ENCODE measurements at regions of chr13 and their contacts with region 1.

Region 1: DNA sequence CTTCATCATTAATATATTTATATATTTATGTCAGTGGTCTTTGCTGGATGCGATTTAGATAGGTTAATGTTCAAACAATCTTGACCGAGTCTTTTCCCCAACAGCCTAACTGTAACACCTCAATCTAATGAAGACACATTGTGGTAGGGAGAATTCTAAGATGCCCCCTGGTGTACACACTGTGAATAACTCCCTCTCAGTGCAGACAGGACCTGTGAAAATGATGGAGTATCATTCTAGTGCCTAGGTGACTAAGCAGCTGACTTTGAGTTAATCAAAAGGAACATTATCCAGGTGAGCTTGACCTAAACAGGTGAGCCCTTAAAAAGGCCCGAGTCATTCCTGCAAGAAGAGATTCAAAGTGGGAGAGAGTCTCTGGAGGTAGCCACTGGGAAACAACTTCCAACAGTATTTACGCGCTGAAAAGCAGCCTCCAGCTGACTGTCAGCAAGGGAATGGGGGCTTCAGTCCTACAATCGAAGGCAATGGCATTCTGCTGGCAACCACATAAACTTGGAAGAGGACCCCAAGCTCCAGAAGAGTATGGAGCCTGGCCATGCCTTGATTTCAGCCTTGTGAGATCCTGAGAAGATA is 28.0 kb upstream of the KBTBD7 start:
- DNase-seq: peak; percentile 40
- H3K4me3 Mint-ChIP-seq: no peak overlapping the region
- H3K27ac Mint-ChIP-seq: no peak overlapping the region
- H3K4me1 Mint-ChIP-seq: no peaks in the 10 kb centered on the region
- H3K27me3 Mint-ChIP-seq: no peaks in the 10 kb centered on the region

Region 2: DNA sequence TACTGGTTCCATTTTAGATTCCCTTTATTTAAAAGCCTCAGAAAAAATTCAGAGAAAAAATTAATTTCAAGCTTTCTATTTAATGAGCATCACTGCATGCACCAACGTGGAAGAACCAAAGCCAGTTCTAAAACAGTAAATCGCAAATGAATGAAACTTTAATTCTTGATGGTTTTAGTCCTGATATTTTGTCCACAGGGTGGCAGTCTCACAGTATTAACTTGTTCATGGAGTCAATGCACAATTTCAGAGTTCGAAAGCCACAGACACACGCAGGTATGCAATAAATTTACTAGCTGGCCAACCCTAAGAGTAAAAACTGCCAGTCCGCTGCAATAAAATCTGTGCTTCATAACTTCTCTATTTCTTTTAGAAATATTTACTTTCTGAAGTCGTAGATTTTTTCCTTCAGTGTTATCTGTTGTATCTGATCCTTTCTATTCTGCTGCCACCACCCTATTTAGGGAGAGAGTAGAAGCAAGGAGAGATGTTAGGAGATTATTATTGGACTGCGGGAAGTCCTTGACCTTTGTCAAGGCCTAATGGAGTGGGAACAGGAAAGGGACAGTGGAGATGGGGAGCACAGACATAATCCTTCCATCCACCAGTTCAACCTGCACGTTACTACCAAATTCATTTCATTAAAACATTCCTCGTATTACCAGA is 168.0 kb before region 1 on chr13:
- intact Hi-C with region 1: loop called (anchors 1 kb)
- DNase-seq: peak; percentile 24
- H3K4me3 Mint-ChIP-seq: no peak overlapping the region
- H3K27ac Mint-ChIP-seq: no peak overlapping the region
- H3K4me1 Mint-ChIP-seq: peaks cover 47% of the 10 kb centered on the region
- H3K27me3 Mint-ChIP-seq: no peaks in the 10 kb centered on the region

Region 3: GRCh38 chr13:41075034-41075433 is 147.3 kb before region 1 on chr13:
- intact Hi-C with region 1: loop called (anchors 1 kb)
- DNase-seq: no peak
- H3K4me3 Mint-ChIP-seq: no peak overlapping the region
- H3K27ac Mint-ChIP-seq: no peak overlapping the region
- H3K4me1 Mint-ChIP-seq: no peaks in the 10 kb centered on the region
- H3K27me3 Mint-ChIP-seq: no peaks in the 10 kb centered on the region

Region 4: GRCh38 chr13:41370736-41371135 is 148.4 kb after region 1 on chr13:
- intact Hi-C with region 1: no loop called
- DNase-seq: no peak
- H3K4me3 Mint-ChIP-seq: no peak overlapping the region
- H3K27ac Mint-ChIP-seq: no peak overlapping the region
- H3K4me1 Mint-ChIP-seq: no peaks in the 10 kb centered on the region
- H3K27me3 Mint-ChIP-seq: no peaks in the 10 kb centered on the region

Measured in activated T-helper 1 cell treated with anti-CD3 and anti-CD28 coated beads, Interleukin-12 subunit alpha, Interleukin-12 subunit beta, Interleukin-2, Interleukin-4 antibody, amounts not matched to agents 30 ng/mL and 10 ng/mL and 1 ng/mL, durations not matched to agents 14 hours and 24 hours and 36 hours (primary cell).